Naive thymus-derived CD4-positive, alpha-beta T cell (primary cell): ENCODE measurements at regions of chr12 and their contacts with region 1.

Region 1: GRCh38 chr12:642633-643474 is 20.4 kb downstream of the NINJ2 start:
- DNase-seq: peak; percentile 64 to 86 (median 80)
- ATAC-seq: peak; percentile 88
- H3K4me3 ChIP-seq: peak overlapping the region; percentile 54
- H3K4me3 Mint-ChIP-seq: peak overlapping the region; percentile 78 to 92 (median 82)
- H3K27ac ChIP-seq: peak overlapping the region; percentile 91
- H3K27ac Mint-ChIP-seq: peak overlapping the region; percentile 85 to 98 (median 95)
- H3K4me1 ChIP-seq: peaks cover 20 to 30% of the 10 kb centered on the region in 2 donors
- H3K4me1 Mint-ChIP-seq: peaks cover 26 to 72% (median 60%) of the 10 kb centered on the region in 7 donors
- H3K27me3 ChIP-seq: no peaks in the 10 kb centered on the region
- H3K27me3 Mint-ChIP-seq: no peaks in the 10 kb centered on the region

Region 2: DNA sequence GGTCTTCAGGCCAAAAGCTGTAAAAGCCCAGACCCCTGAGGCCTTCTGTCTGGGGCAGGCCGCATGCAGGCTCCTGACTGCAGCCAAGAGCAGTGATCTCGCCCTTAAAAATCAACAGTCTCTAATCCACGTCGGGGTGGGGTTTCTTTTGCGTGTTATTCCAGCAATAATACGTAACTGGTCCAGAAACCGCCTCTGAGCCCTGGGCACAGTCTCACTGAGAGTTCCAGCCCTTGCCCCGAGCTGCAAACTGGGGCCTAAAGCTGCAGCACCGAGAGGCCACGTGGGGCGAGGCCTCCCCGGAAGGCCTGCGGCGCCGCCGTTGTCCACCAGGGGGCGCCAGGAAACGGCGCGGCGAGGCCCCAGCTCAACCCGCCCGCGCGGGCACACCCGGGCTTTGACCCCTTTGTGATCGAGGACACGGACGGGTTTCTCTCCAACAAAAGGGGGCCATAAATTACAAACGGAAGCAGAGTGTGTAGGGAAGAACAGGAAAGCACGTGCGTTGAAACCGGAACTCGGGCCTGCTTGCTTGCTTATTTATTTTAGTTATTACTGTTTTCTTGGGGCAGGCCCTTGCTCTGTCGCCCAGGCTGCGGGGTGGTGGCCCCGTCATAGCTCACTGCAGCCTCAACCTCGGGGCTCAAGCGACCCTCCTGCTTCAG is 66.8 kb before region 1 on chr12:
- CTCF ChIA-PET with region 1: no interaction called
- POLR2A ChIA-PET with region 1: interaction called, 10 read pairs
- intact Hi-C with region 1: loop called (anchors 2 kb)
- DNase-seq: peak; percentile 63 to 97 (median 83)
- ATAC-seq: peak; percentile 99
- H3K4me3 ChIP-seq: no peak overlapping the region
- H3K4me3 Mint-ChIP-seq: peak overlapping the region; percentile 14 to 70 (median 56)
- H3K27ac ChIP-seq: no peak overlapping the region
- H3K27ac Mint-ChIP-seq: peak overlapping the region in 7 of 9 donors; percentile 44 to 89 (median 76)
- H3K4me1 ChIP-seq: peaks cover 11 to 16% of the 10 kb centered on the region in 2 donors
- H3K4me1 Mint-ChIP-seq: peaks cover 10 to 38% (median 19%) of the 10 kb centered on the region in 7 donors
- H3K27me3 ChIP-seq: no peaks in the 10 kb centered on the region
- H3K27me3 Mint-ChIP-seq: peaks cover 0 to 1% (median 0%) of the 10 kb centered on the region in 5 donors

Region 3: DNA sequence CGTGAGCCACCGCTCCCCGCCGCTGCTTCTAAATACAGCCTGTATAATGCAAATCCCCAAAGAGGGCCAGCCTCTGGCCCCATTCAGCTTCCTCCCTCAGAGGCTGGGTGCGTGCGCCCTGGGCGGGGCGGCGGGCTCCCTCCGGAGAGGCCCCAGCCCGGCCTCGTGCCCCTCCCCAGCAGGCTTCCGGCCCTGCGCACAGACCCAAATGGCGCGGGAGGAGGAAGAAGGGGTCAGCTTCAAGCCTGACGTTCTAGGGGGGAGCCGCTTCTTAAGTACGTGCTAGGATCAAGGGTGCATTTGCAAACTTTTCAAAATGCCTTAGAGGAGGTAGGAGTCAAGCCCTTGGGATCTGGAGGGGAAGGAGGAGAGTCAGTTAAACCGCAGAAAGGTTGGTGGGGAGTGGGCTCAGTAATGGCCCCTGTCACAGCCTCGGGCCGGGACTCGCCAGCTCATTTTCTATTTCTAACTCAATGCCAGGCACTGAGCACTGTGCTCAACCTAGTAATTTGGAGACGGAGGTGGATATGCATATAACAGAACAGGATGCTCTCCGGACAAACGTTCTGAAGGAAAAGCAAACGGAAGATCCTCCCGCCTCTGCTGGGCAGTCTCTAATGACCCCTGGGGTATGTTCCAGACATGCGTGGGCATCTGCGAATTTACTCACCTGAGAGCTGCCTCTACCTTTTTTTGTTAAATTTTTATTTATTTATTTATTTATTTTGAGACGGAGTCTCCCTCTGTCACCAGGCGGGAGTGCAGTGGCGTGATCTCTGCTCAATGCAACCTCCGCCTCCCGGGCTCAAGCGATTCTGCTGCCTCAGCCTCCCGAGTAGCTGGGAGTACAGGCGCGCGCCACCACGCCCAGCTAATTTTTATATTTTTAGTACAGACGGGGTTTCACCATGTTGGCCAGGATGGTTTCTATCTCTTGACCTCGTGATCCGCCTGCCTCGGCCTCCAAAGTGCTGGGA is 11.9 kb before region 1 on chr12:
- CTCF ChIA-PET with region 1: no interaction called
- POLR2A ChIA-PET with region 1: interaction called, 4 read pairs
- intact Hi-C with region 1: loop called in 1 of 2 experiments (anchors 1 kb)
- DNase-seq: peak in 6 of 9 donors; percentile 54 to 88 (median 70)
- ATAC-seq: no peak
- H3K4me3 ChIP-seq: peak overlapping the region; percentile 53
- H3K4me3 Mint-ChIP-seq: peak overlapping the region in 8 of 10 donors; percentile 82 to 96 (median 91)
- H3K27ac ChIP-seq: peak overlapping the region; percentile 72
- H3K27ac Mint-ChIP-seq: peak overlapping the region in 7 of 9 donors; percentile 93 to 98 (median 95)
- H3K4me1 ChIP-seq: peaks cover 0 to 6% of the 10 kb centered on the region in 2 donors
- H3K4me1 Mint-ChIP-seq: peaks cover 7 to 47% (median 34%) of the 10 kb centered on the region in 7 donors
- H3K27me3 ChIP-seq: no peaks in the 10 kb centered on the region
- H3K27me3 Mint-ChIP-seq: no peaks in the 10 kb centered on the region

Region 4: DNA sequence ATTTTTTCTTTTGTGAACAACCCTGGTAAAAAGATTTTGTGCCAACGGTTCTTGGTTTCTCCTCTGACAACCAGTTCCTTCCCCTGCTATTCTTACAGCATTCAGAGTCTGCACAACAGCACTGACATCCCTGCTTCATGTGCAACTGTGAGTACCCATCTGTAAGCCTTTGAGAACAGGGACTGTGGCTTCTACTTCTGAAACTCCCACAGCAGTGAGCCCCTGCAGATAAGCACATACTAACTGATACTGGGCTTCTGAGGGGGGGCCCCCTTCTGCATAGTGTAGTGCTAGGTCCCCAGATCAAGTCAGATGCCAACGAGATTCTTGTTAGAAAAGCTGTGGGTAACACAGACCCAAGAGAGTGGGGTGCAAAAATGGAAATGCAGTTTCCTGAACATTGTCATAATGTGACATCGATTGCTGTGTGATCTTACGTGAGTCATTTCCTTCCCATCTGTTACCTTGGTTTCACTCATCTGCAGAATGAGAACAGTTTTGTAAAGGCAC is 31.5 kb after region 1 on chr12:
- CTCF ChIA-PET with region 1: no interaction called
- POLR2A ChIA-PET with region 1: interaction called, 3 read pairs
- intact Hi-C with region 1: loop called (anchors 1 kb)
- DNase-seq: peak in 8 of 9 donors; percentile 54 to 84 (median 74)
- ATAC-seq: peak; percentile 95
- H3K4me3 ChIP-seq: peak overlapping the region; percentile 5
- H3K4me3 Mint-ChIP-seq: peak overlapping the region; percentile 31 to 80 (median 69)
- H3K27ac ChIP-seq: peak overlapping the region; percentile 58
- H3K27ac Mint-ChIP-seq: peak overlapping the region; percentile 71 to 96 (median 89)
- H3K4me1 ChIP-seq: peaks cover 31 to 49% of the 10 kb centered on the region in 2 donors
- H3K4me1 Mint-ChIP-seq: peaks cover 28 to 65% (median 51%) of the 10 kb centered on the region in 7 donors
- H3K27me3 ChIP-seq: no peaks in the 10 kb centered on the region
- H3K27me3 Mint-ChIP-seq: no peaks in the 10 kb centered on the region

Region 5: DNA sequence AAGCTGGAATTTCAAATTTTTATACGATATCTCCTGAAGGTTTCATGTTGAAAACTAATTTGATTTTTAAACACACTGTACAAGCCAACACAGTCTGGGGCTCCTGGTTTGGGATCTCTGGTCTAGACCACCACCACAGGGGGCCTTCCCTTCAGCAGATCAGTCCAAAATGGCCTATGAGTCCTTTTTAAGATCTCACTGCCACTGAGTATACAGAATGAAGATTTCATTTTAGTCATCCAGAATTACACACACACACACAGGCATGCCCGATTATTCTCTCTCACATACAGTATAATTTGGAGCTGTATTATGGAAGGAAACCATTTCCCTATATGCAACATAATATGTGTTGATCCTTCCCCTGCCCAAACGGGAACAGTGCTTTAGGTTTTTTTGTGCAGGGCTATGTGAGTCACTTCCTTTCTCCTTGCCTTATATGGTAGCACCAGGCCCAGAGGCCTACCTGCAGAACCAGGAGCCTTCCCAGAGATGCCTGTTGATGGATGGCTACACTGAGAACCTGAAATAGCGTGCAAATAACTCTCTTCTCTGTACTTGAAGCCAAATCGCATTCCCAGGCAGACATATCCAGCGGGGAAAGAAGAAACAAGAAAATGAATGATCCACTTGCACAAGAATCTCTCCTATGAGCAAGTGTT is 81.5 kb after region 1 on chr12:
- CTCF ChIA-PET with region 1: no interaction called
- POLR2A ChIA-PET with region 1: interaction called, 16 read pairs
- intact Hi-C with region 1: no loop called
- DNase-seq: peak in 1 of 9 donors; percentile 31
- ATAC-seq: peak; percentile 69
- H3K4me3 ChIP-seq: no peak overlapping the region
- H3K4me3 Mint-ChIP-seq: peak overlapping the region; percentile 1 to 56 (median 40)
- H3K27ac ChIP-seq: no peak overlapping the region
- H3K27ac Mint-ChIP-seq: peak overlapping the region; percentile 67 to 95 (median 89)
- H3K4me1 ChIP-seq: peaks cover 26 to 68% of the 10 kb centered on the region in 2 donors
- H3K4me1 Mint-ChIP-seq: peaks cover 37 to 96% (median 89%) of the 10 kb centered on the region in 7 donors
- H3K27me3 ChIP-seq: no peaks in the 10 kb centered on the region
- H3K27me3 Mint-ChIP-seq: no peaks in the 10 kb centered on the region